ENCODE measurements at regions of chr11 and their contacts with region 1.

Region 1: GRCh38 chr11:5004424-5005274 is 10.0 kb downstream of the OR51L1 start:
- DNase-seq: peak in 4 of 5 donors; percentile 35 to 58 (median 40)
- ATAC-seq: peak in 1 of 4 donors; percentile 58
- H3K4me3 ChIP-seq: no peak overlapping the region
- H3K27ac ChIP-seq: no peak overlapping the region
- H3K4me1 ChIP-seq: no peaks in the 10 kb centered on the region
- H3K27me3 ChIP-seq: peaks cover 0 to 5% (median 0%) of the 10 kb centered on the region in 9 donors
- CTCF ChIP-seq: peak; percentile 40 to 68 (median 55)
- POLR2A ChIP-seq: no peak

Region 2: DNA sequence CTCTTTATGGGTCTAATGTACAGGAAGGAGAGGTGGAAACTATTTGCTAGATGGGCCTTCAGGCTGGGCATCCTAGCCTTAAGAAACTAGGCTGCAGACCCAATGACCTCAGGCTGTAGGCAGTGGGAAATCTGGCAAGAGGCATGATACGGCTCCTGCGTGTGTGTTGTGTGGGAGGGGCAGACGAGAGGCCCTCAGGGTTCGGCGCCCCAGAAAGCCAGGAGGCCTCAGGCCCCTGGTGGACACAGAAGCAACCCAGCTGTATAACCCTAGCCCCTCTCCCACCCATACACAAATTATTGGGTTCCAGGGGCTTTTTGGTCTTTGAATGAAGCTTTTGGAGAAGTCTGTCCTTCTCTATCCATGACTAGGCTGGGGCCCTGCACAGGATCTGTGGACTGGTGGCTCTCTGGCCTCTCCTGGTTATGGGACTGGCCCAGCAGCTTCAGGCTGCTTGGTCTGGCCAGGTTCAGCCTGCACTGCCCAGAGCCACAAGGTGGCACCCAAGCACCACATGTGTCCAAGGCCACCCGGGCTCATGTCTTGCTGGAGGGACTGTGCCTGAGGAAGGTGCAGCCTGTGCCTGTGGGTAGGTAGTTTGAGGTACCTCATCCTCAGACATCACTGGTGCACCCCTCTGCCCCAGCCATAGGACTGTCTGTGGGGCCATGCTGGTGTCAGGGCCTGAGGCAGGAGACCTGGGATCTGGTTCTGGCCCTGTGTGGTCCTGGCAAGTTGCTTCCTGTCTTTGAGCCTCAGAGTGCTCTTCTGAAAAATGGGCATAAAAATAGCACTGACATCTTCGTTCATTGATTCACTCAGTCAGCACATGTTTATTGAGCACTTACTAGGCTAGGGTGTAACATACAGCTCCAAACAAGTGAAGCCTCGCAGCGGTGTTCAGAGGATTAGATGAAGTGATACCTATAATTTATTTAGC is 822.6 kb before region 1 on chr11:
- intact Hi-C with region 1: loop called in 8 of 10 experiments (anchors 5 to 10 kb)
- DNase-seq: peak in 3 of 5 donors; percentile 40 to 68 (median 68)
- ATAC-seq: peak; percentile 62 to 85 (median 80)
- H3K4me3 ChIP-seq: no peak overlapping the region
- H3K27ac ChIP-seq: no peak overlapping the region
- H3K4me1 ChIP-seq: peaks cover 0 to 13% (median 0%) of the 10 kb centered on the region in 12 donors
- H3K27me3 ChIP-seq: no peaks in the 10 kb centered on the region
- CTCF ChIP-seq: peak; percentile 37 to 71 (median 52)
- POLR2A ChIP-seq: no peak

Region 3: GRCh38 chr11:4626207-4627099 is 378.2 kb before region 1 on chr11:
- intact Hi-C with region 1: loop called in 4 of 10 experiments (anchors 1 to 5 kb)
- DNase-seq: peak in 4 of 5 donors; percentile 34 to 69 (median 58)
- ATAC-seq: peak in 2 of 4 donors; percentile 72 to 75
- H3K4me3 ChIP-seq: no peak overlapping the region
- H3K27ac ChIP-seq: no peak overlapping the region
- H3K4me1 ChIP-seq: no peaks in the 10 kb centered on the region
- H3K27me3 ChIP-seq: no peaks in the 10 kb centered on the region
- CTCF ChIP-seq: peak; percentile 36 to 86 (median 68)
- POLR2A ChIP-seq: no peak

Region 4: DNA sequence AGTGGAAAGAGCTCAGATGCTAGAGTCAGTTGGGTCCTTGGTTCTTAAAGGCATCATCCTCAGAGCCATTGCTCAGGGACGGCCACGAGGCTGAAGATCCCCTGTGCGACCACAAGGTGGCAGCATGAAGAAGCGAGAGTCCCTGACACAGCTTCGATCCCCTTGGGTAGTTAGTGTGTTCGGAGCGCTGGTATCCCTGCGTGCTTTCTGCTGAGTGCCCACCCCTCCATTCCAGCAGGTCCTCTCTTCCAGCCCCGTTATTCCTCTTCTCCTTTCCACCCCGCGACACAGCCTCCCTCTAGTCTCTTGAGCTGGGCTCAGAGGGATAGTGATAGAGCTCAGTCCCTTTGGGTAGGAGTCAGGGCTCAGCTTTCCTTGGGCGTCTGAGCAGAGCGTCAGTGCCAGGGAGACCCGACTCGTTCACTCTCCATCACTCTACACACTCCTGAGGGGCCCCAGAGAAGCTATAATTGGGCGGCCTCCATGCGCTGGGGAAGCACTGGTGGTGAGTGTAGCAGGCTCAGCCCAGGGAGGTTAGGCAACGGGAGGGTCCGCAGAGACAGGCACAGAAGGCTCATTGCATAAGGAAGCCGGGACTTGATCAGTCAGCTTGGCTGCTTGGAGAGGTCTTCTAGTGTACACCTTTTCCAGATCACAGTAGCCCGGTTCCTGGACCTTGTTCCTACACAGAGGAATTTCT is 367.5 kb before region 1 on chr11 and contains the start of gene OR51D1:
- intact Hi-C with region 1: loop called in 9 of 10 experiments (anchors 1 to 5 kb)
- DNase-seq: peak; percentile 70 to 84 (median 75)
- ATAC-seq: peak; percentile 88 to 98 (median 94)
- H3K4me3 ChIP-seq: peak within 1 kb of the TSS in 10 of 12 donors; percentile 28 to 52 (median 38)
- H3K27ac ChIP-seq: peak within 1 kb of the TSS in 3 of 12 donors; percentile 27 to 39 (median 37)
- H3K4me1 ChIP-seq: peaks cover 0 to 17% (median 7%) of the 10 kb centered on the region in 12 donors
- H3K27me3 ChIP-seq: peaks cover 0 to 3% (median 0%) of the 10 kb centered on the region in 9 donors
- CTCF ChIP-seq: peak; percentile 84 to 97 (median 92)
- POLR2A ChIP-seq: no peak
- total RNA-seq, gene OR51D1: not detected